IMR-90 (cell line): ENCODE measurements at regions of chr17 and their contacts with region 1.

Region 1: GRCh38 chr17:37212179-37212578 is 163.6 kb upstream of the C17orf78 start:
- DNase-seq: no peak
- ATAC-seq: peak; percentile 35; the same call in 1 of the 2 replicates
- H3K4me3 ChIP-seq: no peak overlapping the region
- H3K27ac ChIP-seq: no peak overlapping the region
- H3K4me1 ChIP-seq: no peaks in the 10 kb centered on the region
- H3K27me3 ChIP-seq: no peaks in the 10 kb centered on the region
- CTCF ChIP-seq: peak; percentile 31
- POLR2A ChIP-seq: no peak
- RAD21 ChIP-seq: peak; percentile 12; the same call in 1 of the 2 replicates

Region 2: DNA sequence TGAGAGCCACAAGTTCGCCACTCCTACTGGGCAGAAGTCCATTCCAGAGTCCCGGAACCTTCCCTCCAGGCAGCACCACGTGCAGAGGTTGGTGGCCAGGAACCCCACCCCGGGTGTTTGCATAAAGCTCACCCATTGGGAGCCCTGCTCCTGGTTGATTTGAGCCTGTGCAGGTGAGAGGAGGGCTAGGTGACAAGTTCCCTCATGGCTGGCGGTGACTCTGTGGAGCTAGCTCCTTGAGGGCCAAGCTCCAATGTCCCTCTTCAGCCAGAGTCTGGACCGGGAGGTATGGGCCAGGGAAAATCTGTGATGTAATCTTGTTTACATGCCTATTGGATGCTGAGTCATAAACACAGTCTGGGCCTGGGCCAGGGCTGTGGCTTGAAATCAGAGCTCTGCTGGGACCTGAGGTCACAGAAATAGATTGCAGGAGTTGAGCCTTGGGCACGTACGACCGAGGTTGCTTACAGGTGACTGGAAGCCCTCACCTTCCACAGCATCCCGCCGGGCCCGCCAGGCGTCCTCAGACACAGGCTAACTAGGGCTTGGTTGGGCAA is 144.5 kb before region 1 on chr17:
- CTCF ChIA-PET with region 1: no interaction called
- POLR2A ChIA-PET with region 1: interaction called, 22 read pairs
- dilution Hi-C with region 1: no loop called
- in situ Hi-C with region 1: no loop called
- intact Hi-C with region 1: no loop called
- DNase-seq: peak; percentile 83
- ATAC-seq: peak; percentile 93
- H3K4me3 ChIP-seq: no peak overlapping the region
- H3K27ac ChIP-seq: no peak overlapping the region
- H3K4me1 ChIP-seq: peaks cover 3% of the 10 kb centered on the region
- H3K27me3 ChIP-seq: peaks cover 34% of the 10 kb centered on the region
- CTCF ChIP-seq: no peak
- POLR2A ChIP-seq: no peak
- RAD21 ChIP-seq: no peak

Region 3: DNA sequence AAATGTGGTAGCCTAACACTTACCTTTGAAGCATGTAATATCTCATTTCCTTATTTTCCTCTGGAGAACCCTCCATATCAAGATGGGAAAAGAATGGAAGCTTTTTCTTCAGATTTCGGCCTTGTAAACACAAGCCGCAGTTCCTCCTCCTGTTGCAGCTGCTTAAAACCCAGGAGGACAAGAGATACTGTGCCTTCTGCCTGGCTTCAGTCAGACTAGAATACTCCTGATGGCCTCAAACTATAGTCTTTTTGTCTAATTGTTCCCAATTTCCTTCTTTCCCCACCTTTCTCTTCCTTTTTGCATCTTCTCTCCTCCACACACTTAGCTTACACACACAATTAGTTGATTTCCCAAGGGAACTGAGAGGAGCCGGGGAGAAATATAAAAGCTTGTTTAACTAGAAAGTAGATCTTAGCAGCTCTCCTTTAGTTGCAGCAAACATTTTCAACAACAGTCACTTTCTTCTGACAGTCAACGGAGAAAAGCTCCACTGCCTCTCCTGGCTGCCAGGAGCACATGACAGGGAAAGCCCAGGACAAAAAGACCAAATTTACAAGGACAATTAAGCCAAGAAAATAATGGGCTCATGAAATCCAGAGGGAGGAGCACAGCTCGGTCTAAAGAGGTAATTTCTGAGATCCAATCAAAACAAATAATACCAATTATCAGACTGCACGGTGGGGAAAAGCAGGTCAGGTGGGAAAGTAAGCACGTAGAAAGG is 87.2 kb after region 1 on chr17:
- CTCF ChIA-PET with region 1: no interaction called
- POLR2A ChIA-PET with region 1: no interaction called
- dilution Hi-C with region 1: no loop called
- in situ Hi-C with region 1: no loop called
- intact Hi-C with region 1: no loop called
- DNase-seq: no peak
- ATAC-seq: peak; percentile 27; the same call in 1 of the 2 replicates
- H3K4me3 ChIP-seq: no peak overlapping the region
- H3K27ac ChIP-seq: no peak overlapping the region
- H3K4me1 ChIP-seq: peaks cover 5% of the 10 kb centered on the region
- H3K27me3 ChIP-seq: no peaks in the 10 kb centered on the region
- CTCF ChIP-seq: no peak
- POLR2A ChIP-seq: no peak
- RAD21 ChIP-seq: no peak